Activated B cell treated with CpG ODN at 0.5 μM for 24 hours (primary cell): ENCODE measurements at regions of chr17 and their contacts with region 1.

Region 1: GRCh38 chr17:59619293-59620063 is at the start of gene CLTC:
- DNase-seq: peak; percentile 89
- ATAC-seq: peak; percentile 83
- H3K4me3 Mint-ChIP-seq: peak within 1 kb of the TSS; percentile 94
- H3K27ac Mint-ChIP-seq: peak within 1 kb of the TSS; percentile 98
- H3K4me1 Mint-ChIP-seq: peaks cover 59% of the 10 kb centered on the region
- H3K27me3 Mint-ChIP-seq: no peaks in the 10 kb centered on the region
- CTCF ChIP-seq: no peak
- total RNA-seq, gene CLTC: 148 and 189 TPM in 2 replicates

Region 2: GRCh38 chr17:59106463-59107305 is 512.8 kb before region 1 on chr17 and contains the start of gene TRIM37:
- CTCF ChIA-PET with region 1: no interaction called
- POLR2A ChIA-PET with region 1: no interaction called
- intact Hi-C with region 1: loop called (anchors 1 kb)
- DNase-seq: peak; percentile 98
- ATAC-seq: peak; percentile 96
- H3K4me3 Mint-ChIP-seq: peak within 1 kb of the TSS; percentile 94
- H3K27ac Mint-ChIP-seq: peak within 1 kb of the TSS; percentile 82
- H3K4me1 Mint-ChIP-seq: peaks cover 28% of the 10 kb centered on the region
- H3K27me3 Mint-ChIP-seq: no peaks in the 10 kb centered on the region
- CTCF ChIP-seq: no peak
- total RNA-seq, gene TRIM37: 16.4 and 17.3 TPM in 2 replicates

Region 3: DNA sequence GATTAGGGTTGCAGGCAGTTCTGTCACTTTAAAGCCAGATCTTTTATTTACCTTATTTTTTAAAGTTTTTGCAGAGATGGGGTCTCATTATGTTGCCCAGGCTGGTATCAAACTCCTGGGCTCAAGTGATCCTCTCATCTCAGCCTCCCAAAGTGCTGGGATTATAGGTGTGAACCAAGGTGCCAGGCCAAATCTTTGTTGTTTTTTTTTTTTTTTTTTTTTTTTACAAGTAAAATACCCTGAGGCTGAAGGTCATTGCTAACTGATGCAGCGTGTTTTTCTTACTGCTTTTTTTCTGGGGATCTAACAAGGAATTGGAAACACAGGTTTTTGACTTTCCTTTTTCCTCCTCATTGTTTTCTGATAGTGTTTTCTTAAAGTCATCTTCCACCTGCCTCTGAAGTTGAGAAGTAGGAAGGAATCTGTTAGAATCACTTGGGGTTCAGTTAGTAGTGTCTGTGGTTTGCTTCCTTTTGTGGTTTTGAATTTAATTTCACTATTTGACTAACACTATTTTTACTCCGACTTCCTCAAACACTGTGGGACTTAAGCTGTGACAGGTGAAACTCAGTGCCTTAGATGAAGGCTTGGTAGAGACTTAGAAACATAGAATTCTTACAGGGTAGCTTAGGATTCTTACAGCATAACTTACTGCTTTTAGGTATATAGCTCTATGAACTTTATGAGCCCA is 22.5 kb after region 1 on chr17:
- CTCF ChIA-PET with region 1: interaction called, 3 read pairs
- POLR2A ChIA-PET with region 1: interaction called, 116 read pairs
- intact Hi-C with region 1: loop called (anchors 1 kb)
- DNase-seq: no peak
- ATAC-seq: peak; percentile 84
- H3K4me3 Mint-ChIP-seq: peak overlapping the region; percentile 73
- H3K27ac Mint-ChIP-seq: peak overlapping the region; percentile 88
- H3K4me1 Mint-ChIP-seq: peaks cover 74% of the 10 kb centered on the region
- H3K27me3 Mint-ChIP-seq: no peaks in the 10 kb centered on the region
- CTCF ChIP-seq: no peak

Region 4: GRCh38 chr17:59676716-59677115 is 57.2 kb after region 1 on chr17:
- CTCF ChIA-PET with region 1: no interaction called
- POLR2A ChIA-PET with region 1: interaction called, 12 read pairs
- intact Hi-C with region 1: no loop called
- DNase-seq: no peak
- ATAC-seq: no peak
- H3K4me3 Mint-ChIP-seq: no peak overlapping the region
- H3K27ac Mint-ChIP-seq: no peak overlapping the region
- H3K4me1 Mint-ChIP-seq: peaks cover 29% of the 10 kb centered on the region
- H3K27me3 Mint-ChIP-seq: no peaks in the 10 kb centered on the region
- CTCF ChIP-seq: no peak

Region 5: GRCh38 chr17:59734226-59734625 is 114.7 kb after region 1 on chr17:
- CTCF ChIA-PET with region 1: no interaction called
- POLR2A ChIA-PET with region 1: no interaction called
- intact Hi-C with region 1: no loop called
- DNase-seq: no peak
- ATAC-seq: no peak
- H3K4me3 Mint-ChIP-seq: no peak overlapping the region
- H3K27ac Mint-ChIP-seq: no peak overlapping the region
- H3K4me1 Mint-ChIP-seq: no peaks in the 10 kb centered on the region
- H3K27me3 Mint-ChIP-seq: no peaks in the 10 kb centered on the region
- CTCF ChIP-seq: no peak

Region 6: GRCh38 chr17:59837308-59838051 is 218.0 kb after region 1 on chr17:
- CTCF ChIA-PET with region 1: no interaction called
- POLR2A ChIA-PET with region 1: interaction called, 7 read pairs
- intact Hi-C with region 1: loop called (anchors 5 kb)
- DNase-seq: no peak
- ATAC-seq: peak; percentile 87
- H3K4me3 Mint-ChIP-seq: peak overlapping the region; percentile 96
- H3K27ac Mint-ChIP-seq: peak overlapping the region; percentile 97
- H3K4me1 Mint-ChIP-seq: peaks cover 60% of the 10 kb centered on the region
- H3K27me3 Mint-ChIP-seq: no peaks in the 10 kb centered on the region
- CTCF ChIP-seq: no peak